Activated CD4-positive, alpha-beta memory T cell treated with anti-CD3 and anti-CD28 coated beads for 36 hours (primary cell): ENCODE measurements at regions of chr10 and their contacts with region 1.

Region 1: GRCh38 chr10:5283305-5284158 is 81.2 kb upstream of the UCN3 start:
- DNase-seq: peak; percentile 78
- H3K4me3 Mint-ChIP-seq: no peak overlapping the region
- H3K27ac Mint-ChIP-seq: peak overlapping the region; percentile 83
- H3K4me1 Mint-ChIP-seq: peaks cover 34% of the 10 kb centered on the region
- H3K27me3 Mint-ChIP-seq: no peaks in the 10 kb centered on the region

Region 2: GRCh38 chr10:5094265-5095205 is 189.0 kb before region 1 on chr10 and contains the start of gene AKR1C3:
- CTCF ChIA-PET with region 1: interaction called, 5 read pairs
- POLR2A ChIA-PET with region 1: no interaction called
- intact Hi-C with region 1: loop called (anchors 5 kb)
- DNase-seq: no peak
- H3K4me3 Mint-ChIP-seq: peak within 1 kb of the TSS; percentile 47
- H3K27ac Mint-ChIP-seq: no peak within 1 kb of the TSS
- H3K4me1 Mint-ChIP-seq: peaks cover 11% of the 10 kb centered on the region
- H3K27me3 Mint-ChIP-seq: peaks cover 13% of the 10 kb centered on the region
- total RNA-seq, gene AKR1C3: 0.33 to 0.70 TPM

Region 3: GRCh38 chr10:5184987-5185775 is 98.4 kb before region 1 on chr10 and contains the start of gene AKR1C8:
- CTCF ChIA-PET with region 1: no interaction called
- POLR2A ChIA-PET with region 1: no interaction called
- intact Hi-C with region 1: no loop called
- DNase-seq: no peak
- H3K4me3 Mint-ChIP-seq: no peak within 1 kb of the TSS
- H3K27ac Mint-ChIP-seq: no peak within 1 kb of the TSS
- H3K4me1 Mint-ChIP-seq: no peaks in the 10 kb centered on the region
- H3K27me3 Mint-ChIP-seq: no peaks in the 10 kb centered on the region
- total RNA-seq, gene AKR1C8: 0.33 to 0.80 TPM